Activated CD4-positive, alpha-beta T cell treated with anti-CD3 and anti-CD28 coated beads, Interleukin-2, amount 10 ng/mL, durations not matched to agents 7 days and 5 days (primary cell): ENCODE measurements at regions of chr12 and their contacts with region 1.

Region 1: GRCh38 chr12:57452937-57453509 is 2.1 kb upstream of the INHBE start:
- DNase-seq: peak; percentile 59
- H3K4me3 Mint-ChIP-seq: no peak overlapping the region
- H3K27ac Mint-ChIP-seq: no peak overlapping the region
- H3K4me1 Mint-ChIP-seq: peaks cover 11% of the 10 kb centered on the region
- H3K27me3 Mint-ChIP-seq: no peaks in the 10 kb centered on the region

Region 2: GRCh38 chr12:57309420-57309819 is 143.6 kb before region 1 on chr12:
- CTCF ChIA-PET with region 1: interaction called, 19 read pairs
- POLR2A ChIA-PET with region 1: no interaction called
- DNase-seq: no peak
- H3K4me3 Mint-ChIP-seq: no peak overlapping the region
- H3K27ac Mint-ChIP-seq: no peak overlapping the region
- H3K4me1 Mint-ChIP-seq: peaks cover 5% of the 10 kb centered on the region
- H3K27me3 Mint-ChIP-seq: no peaks in the 10 kb centered on the region

Region 3: GRCh38 chr12:57430931-57431720 is 21.9 kb before region 1 on chr12 and contains the start of gene R3HDM2:
- CTCF ChIA-PET with region 1: interaction called, 28 read pairs
- POLR2A ChIA-PET with region 1: no interaction called
- DNase-seq: peak; percentile 95
- H3K4me3 Mint-ChIP-seq: peak within 1 kb of the TSS; percentile 100
- H3K27ac Mint-ChIP-seq: peak within 1 kb of the TSS; percentile 100
- H3K4me1 Mint-ChIP-seq: peaks cover 42% of the 10 kb centered on the region
- H3K27me3 Mint-ChIP-seq: no peaks in the 10 kb centered on the region
- total RNA-seq, gene R3HDM2: 71.6 to 74.5 TPM

Region 4: DNA sequence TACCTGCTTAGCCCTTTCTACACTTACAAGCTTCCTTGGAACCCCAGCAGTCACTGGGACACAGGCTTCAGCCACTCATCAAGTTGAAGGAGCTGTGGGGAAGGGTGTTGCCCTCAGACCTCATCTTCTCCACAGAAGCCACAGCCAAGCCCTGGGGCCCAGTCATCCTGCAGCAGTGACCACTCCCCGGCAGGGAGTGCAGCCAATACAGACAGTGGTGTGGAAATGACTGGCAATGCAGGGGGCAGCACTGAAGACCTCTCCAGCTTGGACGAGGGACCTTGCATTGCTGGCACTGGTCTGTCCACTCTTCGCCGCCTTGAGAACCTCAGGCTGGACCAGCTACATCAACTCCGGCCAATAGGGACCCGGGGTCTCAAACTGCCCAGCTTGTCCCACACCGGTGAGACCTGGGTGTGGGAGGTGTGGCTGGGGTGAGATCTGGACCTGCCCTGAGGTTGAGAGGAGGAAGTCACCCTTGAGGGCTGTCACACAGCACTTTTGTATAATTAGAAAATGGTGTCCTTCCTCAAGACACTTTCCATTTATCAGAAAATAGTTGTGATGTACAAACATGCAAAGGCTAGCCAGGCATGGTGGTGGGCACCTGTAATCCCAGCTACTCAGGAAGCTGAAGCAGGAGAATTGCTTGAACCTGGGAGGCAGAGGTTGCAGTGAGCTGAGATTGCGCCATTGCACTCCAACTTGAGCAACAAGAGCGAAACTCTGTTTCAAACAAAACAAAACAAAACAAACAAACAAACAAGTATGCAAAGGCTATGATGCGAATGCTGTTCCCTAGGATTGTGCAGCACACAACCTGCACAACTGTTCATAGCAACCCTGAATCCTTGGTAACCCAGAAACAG is 16.5 kb after region 1 on chr12:
- CTCF ChIA-PET with region 1: interaction called, 14 read pairs
- POLR2A ChIA-PET with region 1: no interaction called
- DNase-seq: no peak
- H3K4me3 Mint-ChIP-seq: no peak overlapping the region
- H3K27ac Mint-ChIP-seq: no peak overlapping the region
- H3K4me1 Mint-ChIP-seq: peaks cover 33% of the 10 kb centered on the region
- H3K27me3 Mint-ChIP-seq: no peaks in the 10 kb centered on the region